Heart right ventricle (tissue), 16 donors: ENCODE measurements at regions of chr11 and their contacts with region 1.

Region 1: GRCh38 chr11:43130616-43131015 is 181.2 kb upstream of the API5 start:
- DNase-seq: peak in 1 of 2 donors; percentile 4
- ATAC-seq: peak in 6 of 8 donors; percentile 38 to 76 (median 56)
- H3K4me3 ChIP-seq: no peak overlapping the region
- H3K27ac ChIP-seq: no peak overlapping the region
- H3K4me1 ChIP-seq: no peaks in the 10 kb centered on the region
- H3K27me3 ChIP-seq: no peaks in the 10 kb centered on the region
- CTCF ChIP-seq: peak in 6 of 9 donors; percentile 19 to 58 (median 48)

Region 2: GRCh38 chr11:42762348-42762747 is 368.3 kb before region 1 on chr11:
- intact Hi-C with region 1: loop called in 3 of 10 experiments (anchors 5 to 10 kb)
- DNase-seq: no peak
- ATAC-seq: no peak
- H3K4me3 ChIP-seq: no peak overlapping the region
- H3K27ac ChIP-seq: no peak overlapping the region
- H3K4me1 ChIP-seq: no peaks in the 10 kb centered on the region
- H3K27me3 ChIP-seq: peaks cover 0 to 11% (median 0%) of the 10 kb centered on the region in 7 donors
- CTCF ChIP-seq: no peak